Right cardiac atrium (tissue), 5 donors: ENCODE measurements at regions of chr6 and their contacts with region 1.

Region 1: GRCh38 chr6:134161036-134161435 is 108.6 kb upstream of the SLC2A12 start:
- DNase-seq: no peak
- ATAC-seq: no peak
- H3K4me3 ChIP-seq: no peak overlapping the region
- H3K27ac ChIP-seq: no peak overlapping the region
- H3K4me1 ChIP-seq: no peaks in the 10 kb centered on the region
- H3K27me3 ChIP-seq: no peaks in the 10 kb centered on the region

Region 2: GRCh38 chr6:134822920-134823709 is 662.1 kb after region 1 on chr6:
- intact Hi-C with region 1: loop called in 2 of 4 experiments (anchors 5 kb)
- DNase-seq: peak; percentile 32 to 69 (median 66)
- ATAC-seq: peak; percentile 77 to 92
- H3K4me3 ChIP-seq: no peak overlapping the region
- H3K27ac ChIP-seq: no peak overlapping the region
- H3K4me1 ChIP-seq: peaks cover 2% of the 10 kb centered on the region
- H3K27me3 ChIP-seq: no peaks in the 10 kb centered on the region

Region 3: GRCh38 chr6:134882426-134883038 is 721.5 kb after region 1 on chr6:
- intact Hi-C with region 1: loop called in 2 of 4 experiments (anchors 5 kb)
- DNase-seq: peak; percentile 31 to 87 (median 80)
- ATAC-seq: peak; percentile 64 to 79
- H3K4me3 ChIP-seq: no peak overlapping the region
- H3K27ac ChIP-seq: no peak overlapping the region
- H3K4me1 ChIP-seq: no peaks in the 10 kb centered on the region
- H3K27me3 ChIP-seq: no peaks in the 10 kb centered on the region

Region 4: GRCh38 chr6:134938896-134939295 is 777.9 kb after region 1 on chr6:
- intact Hi-C with region 1: loop called in 3 of 4 experiments (anchors 5 to 10 kb)
- DNase-seq: no peak
- ATAC-seq: no peak
- H3K4me3 ChIP-seq: no peak overlapping the region
- H3K27ac ChIP-seq: no peak overlapping the region
- H3K4me1 ChIP-seq: no peaks in the 10 kb centered on the region
- H3K27me3 ChIP-seq: no peaks in the 10 kb centered on the region